Endothelial cell of umbilical vein (primary cell): ENCODE measurements at regions of chr17 and their contacts with region 1.

Region 1: GRCh38 chr17:27980043-27980442 is 62.4 kb upstream of the NLK start:
- DNase-seq: peak; percentile 99
- H3K4me3 ChIP-seq: no peak overlapping the region
- H3K27ac ChIP-seq: peak overlapping the region; percentile 91
- H3K4me1 ChIP-seq: peaks cover 52% of the 10 kb centered on the region
- H3K27me3 ChIP-seq: no peaks in the 10 kb centered on the region
- CTCF ChIP-seq: no peak
- POLR2A ChIP-seq: peak; percentile 47

Region 2: GRCh38 chr17:27993723-27994310 is 13.8 kb after region 1 on chr17:
- CTCF ChIA-PET with region 1: no interaction called
- POLR2A ChIA-PET with region 1: no interaction called
- dilution Hi-C with region 1: no loop called
- intact Hi-C with region 1: no loop called
- DNase-seq: peak; percentile 12
- H3K4me3 ChIP-seq: no peak overlapping the region
- H3K27ac ChIP-seq: no peak overlapping the region
- H3K4me1 ChIP-seq: peaks cover 13% of the 10 kb centered on the region
- H3K27me3 ChIP-seq: no peaks in the 10 kb centered on the region
- CTCF ChIP-seq: no peak
- POLR2A ChIP-seq: no peak

Region 3: DNA sequence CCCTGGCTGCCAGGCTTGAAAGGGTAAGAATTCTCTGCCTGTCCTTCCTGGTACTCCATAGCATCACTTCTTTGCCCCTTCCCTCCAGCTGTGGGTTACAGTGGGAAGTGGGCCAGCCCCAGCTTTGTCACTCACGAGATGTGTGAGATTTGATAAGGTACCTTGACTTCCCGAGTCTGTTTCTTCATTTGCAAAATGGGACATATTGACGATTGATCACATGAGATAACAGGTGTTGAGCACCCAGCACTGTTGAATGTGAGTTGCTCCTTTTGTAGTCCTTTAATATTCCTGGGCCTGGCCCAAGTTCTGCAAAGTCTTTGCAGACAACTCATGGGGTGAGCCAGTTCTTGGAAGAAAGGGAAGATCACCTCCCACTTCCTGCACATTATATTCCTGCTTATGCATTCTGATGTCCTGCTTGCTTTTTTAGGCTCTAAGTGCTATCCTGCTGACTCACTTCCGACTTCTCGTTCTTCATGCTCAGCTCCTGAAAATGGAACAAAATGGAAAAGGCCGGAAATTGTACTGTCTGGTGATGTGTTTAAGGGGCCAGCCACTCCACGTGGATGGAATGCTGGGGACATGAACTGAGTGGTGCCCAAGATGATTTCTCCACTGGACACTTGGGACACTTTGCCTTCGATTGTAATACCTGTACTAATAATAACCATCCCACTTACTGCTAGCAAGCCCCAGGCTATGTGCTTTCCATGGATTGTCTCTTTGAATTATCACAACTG is 54.1 kb after region 1 on chr17:
- CTCF ChIA-PET with region 1: interaction called, 4 read pairs
- POLR2A ChIA-PET with region 1: no interaction called
- dilution Hi-C with region 1: no loop called
- intact Hi-C with region 1: loop called (anchors 1 kb)
- DNase-seq: peak; percentile 80
- H3K4me3 ChIP-seq: no peak overlapping the region
- H3K27ac ChIP-seq: peak overlapping the region; percentile 82
- H3K4me1 ChIP-seq: peaks cover 21% of the 10 kb centered on the region
- H3K27me3 ChIP-seq: no peaks in the 10 kb centered on the region
- CTCF ChIP-seq: no peak
- POLR2A ChIP-seq: no peak

Region 4: DNA sequence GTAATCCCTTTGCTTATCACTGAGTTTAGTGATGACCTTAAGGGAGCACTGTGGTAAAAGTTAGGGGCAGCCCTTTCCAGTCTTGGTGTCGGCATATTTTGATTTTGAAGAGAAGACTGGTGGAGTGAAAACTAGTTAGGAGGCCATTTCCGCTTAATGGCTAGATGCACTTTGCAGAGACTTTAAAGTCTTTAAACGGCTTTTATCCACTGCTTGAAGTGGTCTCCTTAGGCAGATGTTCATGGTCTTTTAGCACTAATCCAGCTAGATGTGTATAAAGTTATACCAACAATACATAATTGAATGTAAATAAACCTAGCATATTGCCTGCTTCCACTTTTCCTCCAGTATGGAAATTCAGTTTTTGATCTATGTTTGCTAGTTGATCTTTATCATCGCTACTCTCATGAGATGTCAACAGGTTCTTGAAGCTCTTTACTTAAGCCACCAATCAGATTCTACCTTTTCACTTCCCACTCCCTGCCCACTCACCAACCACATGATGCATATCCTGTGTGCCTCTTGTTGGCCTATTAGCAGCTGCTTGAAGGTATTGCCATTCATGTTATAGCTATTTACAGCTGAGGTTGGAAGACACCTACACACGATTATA is 194.4 kb after region 1 on chr17:
- CTCF ChIA-PET with region 1: no interaction called
- POLR2A ChIA-PET with region 1: no interaction called
- dilution Hi-C with region 1: no loop called
- intact Hi-C with region 1: loop called (anchors 1 kb)
- DNase-seq: peak; percentile 29
- H3K4me3 ChIP-seq: no peak overlapping the region
- H3K27ac ChIP-seq: peak overlapping the region; percentile 79
- H3K4me1 ChIP-seq: peaks cover 45% of the 10 kb centered on the region
- H3K27me3 ChIP-seq: no peaks in the 10 kb centered on the region
- CTCF ChIP-seq: no peak
- POLR2A ChIP-seq: no peak